GM18951 (cell line): ENCODE measurements at regions of chr17 and their contacts with region 1.

Region 1: DNA sequence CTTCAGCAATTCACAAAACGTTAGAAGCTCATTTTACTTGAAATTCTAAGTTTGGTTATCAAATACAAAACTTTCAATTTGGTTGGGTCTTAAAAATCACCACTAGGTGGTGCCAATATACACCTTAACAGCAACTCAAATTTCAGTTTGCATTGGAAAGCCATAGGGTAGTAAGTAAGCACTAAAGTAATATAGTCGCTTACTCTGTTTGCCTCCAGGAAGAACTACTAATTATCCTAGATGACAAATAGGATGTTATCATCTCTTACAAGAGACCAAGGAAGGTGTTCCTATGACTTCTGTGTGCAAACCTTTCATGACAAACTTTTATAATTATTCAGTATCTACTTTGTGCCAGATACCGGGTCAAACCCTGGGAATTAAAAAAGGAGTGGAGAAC is 93.3 kb downstream of the MYO1D start:
- POLR2A ChIP-seq: no peak

Region 2: DNA sequence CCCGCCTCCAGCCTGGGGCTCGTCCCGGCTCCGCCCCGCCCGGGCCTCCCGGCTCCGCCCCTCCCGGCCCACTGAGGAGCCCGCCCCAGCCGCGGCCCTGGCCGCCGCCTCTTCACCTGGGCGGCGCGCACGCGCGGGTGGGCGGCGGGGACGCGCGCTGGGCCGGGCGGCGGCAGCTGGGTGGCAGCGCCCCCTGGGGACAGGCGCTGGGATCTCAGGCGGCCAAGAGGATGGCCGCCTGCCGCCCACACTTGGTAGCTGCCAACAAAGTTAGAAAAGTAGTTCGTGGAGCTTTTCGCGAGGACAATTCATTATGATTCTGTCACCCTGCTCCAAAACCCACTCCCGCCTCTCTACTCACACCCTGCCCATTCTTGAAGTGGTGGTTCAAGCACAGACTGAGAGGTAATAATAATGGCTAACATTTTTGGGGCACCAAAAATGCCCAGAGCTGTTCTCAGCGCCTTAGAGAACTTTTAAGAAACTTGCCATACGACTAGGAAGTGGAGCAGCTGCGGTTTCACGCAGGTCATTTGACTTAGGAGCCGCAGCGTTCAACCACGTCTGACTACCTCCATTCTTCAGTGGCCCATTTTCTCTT is 93.7 kb after region 1 on chr17:
- in situ Hi-C with region 1: loop called (anchors 10 kb)
- POLR2A ChIP-seq: no peak

Region 3: GRCh38 chr17:32927724-32928585 is 144.4 kb after region 1 on chr17 and contains the start of gene TMEM98:
- in situ Hi-C with region 1: no loop called
- POLR2A ChIP-seq: no peak